Activated CD4-positive, alpha-beta memory T cell treated with anti-CD3 and anti-CD28 coated beads for 36 hours (primary cell): ENCODE measurements at regions of chr1 and their contacts with region 1.

Region 1: DNA sequence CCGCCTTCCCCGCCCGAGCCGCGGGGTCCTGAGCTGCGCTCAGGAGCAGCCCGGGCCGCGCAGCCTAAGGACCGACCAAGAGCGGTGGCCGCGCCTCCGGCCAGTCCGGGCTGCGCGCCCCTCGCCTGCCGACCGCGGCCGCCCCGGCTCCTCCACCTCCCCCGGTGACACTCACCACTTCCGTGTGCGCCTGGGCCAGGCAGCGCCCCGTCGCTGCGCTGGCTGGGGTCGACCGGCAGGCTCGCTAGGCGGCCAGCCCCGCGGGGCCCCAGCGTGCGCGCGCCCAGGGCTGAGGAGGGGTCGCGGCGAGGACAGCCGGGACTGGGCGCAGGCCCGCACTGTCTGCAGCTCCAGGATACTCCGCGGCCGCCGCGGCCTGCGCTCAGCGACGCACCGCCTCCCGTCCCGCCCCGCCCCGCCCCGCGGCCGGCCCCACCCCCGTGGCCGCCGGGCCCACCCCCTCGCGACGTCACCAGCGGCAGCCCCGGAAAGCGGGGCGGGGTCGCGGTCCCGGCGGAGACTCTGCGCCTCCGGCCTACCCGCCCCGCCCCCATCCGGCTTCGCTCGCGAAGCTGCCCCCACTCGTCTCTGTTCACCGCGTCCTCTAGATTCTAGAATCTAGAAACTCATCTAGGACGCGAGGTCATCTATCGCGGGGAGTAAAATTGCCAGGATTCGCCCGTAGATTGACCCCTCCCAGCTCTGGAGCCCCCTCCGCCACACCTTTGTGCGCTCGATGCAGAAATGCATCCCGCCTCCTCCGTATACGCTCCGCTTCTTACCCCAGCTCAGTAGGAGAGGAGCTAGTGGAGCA is at the start of gene JAK1:
- DNase-seq: peak; percentile 89
- H3K4me3 Mint-ChIP-seq: peak within 1 kb of the TSS; percentile 91
- H3K27ac Mint-ChIP-seq: peak within 1 kb of the TSS; percentile 72
- H3K4me1 Mint-ChIP-seq: peaks cover 48% of the 10 kb centered on the region
- H3K27me3 Mint-ChIP-seq: no peaks in the 10 kb centered on the region
- total RNA-seq, gene JAK1: 115 to 128 TPM

Region 2: DNA sequence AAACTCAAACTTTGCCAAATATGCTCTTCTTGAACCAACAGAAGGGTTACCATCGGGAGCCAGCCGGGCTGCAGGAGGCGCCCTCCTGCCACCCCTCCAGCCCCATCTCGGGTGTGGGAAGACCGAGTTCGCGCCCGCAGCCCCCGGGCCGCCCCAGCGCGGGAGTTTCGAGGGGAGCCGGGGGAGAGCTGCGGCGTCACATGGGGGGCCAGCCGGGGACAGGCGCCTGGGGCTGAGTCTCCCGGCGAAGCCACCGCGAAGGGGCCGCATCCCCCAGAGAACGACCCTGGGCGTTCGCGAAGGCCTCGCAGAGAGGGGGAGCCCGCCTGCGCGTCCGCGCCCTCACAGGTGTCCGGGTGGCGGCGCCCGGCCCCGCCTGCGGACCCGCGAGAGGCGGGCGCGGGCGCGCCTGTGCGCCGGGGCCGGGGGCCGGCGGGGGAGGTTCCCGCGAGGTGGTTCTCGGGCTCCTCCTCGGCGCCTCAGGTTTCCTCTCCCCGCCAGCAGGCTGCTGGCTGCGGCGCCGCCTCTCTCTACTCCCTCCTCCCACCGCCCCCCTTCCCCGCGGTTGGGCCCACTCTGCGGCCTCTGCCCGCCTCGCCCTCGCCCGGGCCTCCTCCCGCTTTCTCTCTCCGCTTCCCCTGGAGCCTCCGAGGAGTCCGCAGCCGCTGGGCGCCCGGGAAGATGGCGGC is 221.7 kb before region 1 on chr1 and contains the start of gene RAVER2:
- CTCF ChIA-PET with region 1: no interaction called
- POLR2A ChIA-PET with region 1: no interaction called
- intact Hi-C with region 1: loop called (anchors 10 kb)
- DNase-seq: peak; percentile 72
- H3K4me3 Mint-ChIP-seq: peak within 1 kb of the TSS; percentile 77
- H3K27ac Mint-ChIP-seq: no peak within 1 kb of the TSS
- H3K4me1 Mint-ChIP-seq: peaks cover 5% of the 10 kb centered on the region
- H3K27me3 Mint-ChIP-seq: peaks cover 3% of the 10 kb centered on the region
- total RNA-seq, gene RAVER2: 2.9 to 3.2 TPM

Region 3: DNA sequence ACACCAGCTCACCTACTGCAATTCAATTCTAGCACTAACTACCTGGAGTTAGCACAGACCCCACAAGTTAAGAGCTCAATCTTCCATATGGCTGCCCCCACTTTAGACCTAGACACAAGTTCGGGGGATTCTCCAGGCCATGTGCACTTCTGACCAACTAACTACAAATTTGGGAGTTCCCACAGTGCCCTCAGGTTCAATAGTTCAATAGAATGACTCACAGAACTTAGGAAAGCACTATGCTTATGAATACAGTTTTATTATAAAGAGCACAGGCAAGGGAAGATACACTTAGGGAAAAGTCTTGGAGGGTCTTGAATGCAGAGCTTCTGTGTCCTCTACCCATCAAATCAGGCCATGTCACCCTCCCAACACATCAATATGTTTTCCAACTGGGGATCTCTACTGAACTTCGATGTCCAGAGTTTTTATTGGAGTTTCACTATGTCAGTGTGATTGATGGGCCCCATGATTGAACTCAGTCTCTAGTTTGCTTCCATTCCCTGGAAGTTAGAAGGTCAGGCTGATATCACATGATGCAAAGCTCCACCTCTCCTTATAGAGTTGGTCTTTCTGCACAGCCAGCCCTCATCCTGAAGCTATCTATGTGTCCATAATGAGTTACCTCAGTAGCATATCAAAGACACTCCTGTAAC is 175.4 kb before region 1 on chr1:
- CTCF ChIA-PET with region 1: no interaction called
- POLR2A ChIA-PET with region 1: no interaction called
- intact Hi-C with region 1: no loop called
- DNase-seq: no peak
- H3K4me3 Mint-ChIP-seq: no peak overlapping the region
- H3K27ac Mint-ChIP-seq: no peak overlapping the region
- H3K4me1 Mint-ChIP-seq: no peaks in the 10 kb centered on the region
- H3K27me3 Mint-ChIP-seq: no peaks in the 10 kb centered on the region

Region 4: DNA sequence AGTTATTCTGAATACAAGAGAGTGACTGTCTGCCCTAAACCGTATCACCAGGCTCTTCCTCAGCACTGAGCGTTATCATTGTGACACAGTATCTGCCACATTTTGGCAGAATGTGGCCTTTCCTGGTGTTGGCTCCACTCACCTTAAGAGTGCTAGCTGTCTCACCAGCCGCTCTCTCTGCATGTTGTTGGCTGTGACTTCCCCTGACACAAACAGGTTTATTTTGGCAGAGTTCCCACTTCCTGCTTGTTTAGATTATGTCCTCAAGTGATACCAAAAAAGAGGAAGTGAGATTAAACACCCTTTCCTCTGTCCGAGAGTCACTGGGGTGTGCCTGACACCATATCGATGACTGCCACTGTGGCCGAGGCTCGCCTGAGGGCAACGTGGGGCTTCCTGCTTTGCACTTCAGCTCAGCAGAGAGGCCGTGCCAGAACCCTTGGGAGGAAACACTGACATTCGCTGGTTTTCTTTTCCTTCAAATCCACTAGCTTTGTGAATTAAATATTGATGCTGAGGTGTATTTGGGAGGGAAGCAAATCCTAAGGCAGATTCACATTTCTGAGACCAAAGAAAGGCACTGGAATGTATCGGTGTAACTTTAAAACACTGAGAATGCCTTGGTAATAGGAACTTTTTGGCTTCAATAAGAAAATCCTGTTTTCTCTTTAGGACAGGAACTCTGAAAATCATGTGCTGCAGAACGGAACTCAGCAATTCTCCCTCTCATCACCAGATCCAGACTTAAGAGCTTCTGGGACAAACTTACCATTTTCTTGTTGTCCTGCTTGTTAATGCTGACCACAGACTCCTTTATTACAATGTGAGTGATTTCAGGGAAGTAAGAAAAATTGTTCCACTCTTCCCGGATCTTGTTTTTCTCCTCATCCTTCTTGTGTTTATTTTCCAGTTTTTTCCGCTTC is 102.1 kb before region 1 on chr1:
- CTCF ChIA-PET with region 1: no interaction called
- POLR2A ChIA-PET with region 1: no interaction called
- intact Hi-C with region 1: loop called (anchors 1 kb)
- DNase-seq: peak; percentile 64
- H3K4me3 Mint-ChIP-seq: no peak overlapping the region
- H3K27ac Mint-ChIP-seq: peak overlapping the region; percentile 59
- H3K4me1 Mint-ChIP-seq: peaks cover 34% of the 10 kb centered on the region
- H3K27me3 Mint-ChIP-seq: no peaks in the 10 kb centered on the region

Region 5: DNA sequence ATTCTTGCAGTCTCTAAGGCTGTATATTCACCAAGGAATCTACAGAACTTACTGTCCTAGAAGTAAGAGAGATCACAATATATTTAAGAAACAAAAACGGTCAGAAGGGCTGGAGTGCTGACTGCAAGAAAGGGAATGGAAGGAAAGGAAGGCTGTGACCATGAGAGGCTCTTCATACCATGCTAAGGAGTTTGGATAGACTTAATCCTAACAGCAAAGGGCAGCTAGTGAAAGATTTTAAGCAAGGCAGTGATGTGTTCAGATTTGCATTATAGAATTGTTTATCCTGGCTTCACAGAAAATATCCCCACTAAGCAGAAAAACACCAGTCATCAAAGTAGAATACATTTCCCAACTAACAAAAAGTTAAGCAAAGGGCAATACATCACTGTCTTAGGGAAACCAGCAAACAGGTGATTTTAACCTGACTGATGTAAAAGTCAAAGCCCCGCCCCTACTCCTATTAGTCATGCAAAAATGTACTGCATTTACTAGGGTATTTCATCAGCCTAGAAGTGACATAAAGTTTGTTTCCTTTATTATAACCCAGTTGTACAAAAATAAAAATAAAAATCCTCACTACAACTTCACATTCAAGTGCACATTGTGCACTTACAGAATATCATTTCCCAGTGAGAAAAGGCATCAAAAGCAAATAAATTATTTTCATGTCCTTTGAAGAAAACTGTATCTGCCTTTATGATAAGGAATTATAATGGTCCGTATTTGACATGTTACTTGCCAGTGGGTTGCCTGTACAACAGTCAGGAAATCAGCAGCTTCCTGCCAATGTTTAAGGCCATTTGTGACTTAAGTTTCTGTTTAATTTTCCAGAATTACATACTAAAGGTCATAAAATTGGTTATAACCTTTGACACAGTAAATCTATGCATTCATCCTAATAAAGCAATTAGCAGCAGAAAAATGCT is 17.2 kb before region 1 on chr1:
- CTCF ChIA-PET with region 1: no interaction called
- POLR2A ChIA-PET with region 1: interaction called, 8 read pairs
- intact Hi-C with region 1: loop called (anchors 2 kb)
- DNase-seq: peak; percentile 60
- H3K4me3 Mint-ChIP-seq: peak overlapping the region; percentile 18
- H3K27ac Mint-ChIP-seq: peak overlapping the region; percentile 86
- H3K4me1 Mint-ChIP-seq: peaks cover 70% of the 10 kb centered on the region
- H3K27me3 Mint-ChIP-seq: no peaks in the 10 kb centered on the region